ENCODE measurements at regions of chr1 and their contacts with region 1.

Region 1: DNA sequence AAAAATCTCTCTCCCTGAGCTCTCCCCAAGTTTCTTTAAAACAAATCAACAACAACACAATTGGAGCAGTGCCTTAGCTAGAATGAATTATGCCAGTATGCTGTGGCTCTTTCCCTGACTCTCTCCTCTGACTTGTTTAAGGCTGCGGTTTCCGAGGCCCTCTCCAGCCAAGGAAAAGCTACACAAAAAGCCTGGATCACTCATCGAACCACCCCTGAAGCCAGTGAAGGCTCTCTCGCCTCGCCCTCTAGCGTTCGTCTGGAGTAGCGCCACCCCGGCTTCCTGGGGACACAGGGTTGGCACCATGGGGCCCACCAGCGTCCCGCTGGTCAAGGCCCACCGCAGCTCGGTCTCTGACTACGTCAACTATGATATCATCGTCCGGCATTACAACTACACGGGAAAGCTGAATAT is 1.9 kb downstream of the S1PR1 start:
- DNase-seq: peak; percentile 95

Region 2: GRCh38 chr1:100895540-100896483 is 342.9 kb before region 1 on chr1 and contains the start of gene SLC30A7:
- intact Hi-C with region 1: loop called (anchors 1 kb)
- DNase-seq: peak; percentile 98
- total RNA-seq, gene SLC30A7: 8.5 TPM

Region 3: GRCh38 chr1:101025657-101026504 is 212.8 kb before region 1 on chr1 and contains the start of gene DPH5:
- intact Hi-C with region 1: loop called (anchors 1 kb)
- DNase-seq: peak; percentile 96
- total RNA-seq, gene DPH5: 35.4 TPM

Region 4: DNA sequence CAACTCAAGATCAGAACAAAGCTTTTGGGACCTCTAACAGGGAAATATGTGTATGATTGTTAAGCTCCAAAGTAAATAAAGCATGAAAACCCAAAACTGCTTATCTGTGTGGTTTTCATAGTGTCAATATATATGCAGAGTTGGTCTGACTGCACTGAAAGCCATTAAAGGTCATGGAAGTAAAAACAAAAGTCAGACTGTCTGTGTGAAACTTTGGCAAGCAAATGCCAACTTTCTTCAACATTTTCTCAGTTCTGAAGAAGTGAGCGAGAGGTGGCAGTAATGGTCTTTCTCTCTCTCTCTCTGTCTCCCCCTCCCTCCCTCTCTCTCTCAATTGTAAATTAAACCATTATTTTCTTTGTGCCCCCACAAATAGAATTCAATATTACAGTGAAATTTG is 101.9 kb before region 1 on chr1:
- intact Hi-C with region 1: loop called (anchors 2 kb)
- DNase-seq: no peak

Region 5: GRCh38 chr1:101181930-101182329 is 56.8 kb before region 1 on chr1:
- intact Hi-C with region 1: loop called (anchors 5 kb)
- DNase-seq: no peak

Region 6: GRCh38 chr1:101264697-101265096 is 26.0 kb after region 1 on chr1:
- intact Hi-C with region 1: loop called (anchors 2 kb)
- DNase-seq: no peak